IMR-90 (cell line): ENCODE measurements at regions of chr6 and their contacts with region 1.

Region 1: DNA sequence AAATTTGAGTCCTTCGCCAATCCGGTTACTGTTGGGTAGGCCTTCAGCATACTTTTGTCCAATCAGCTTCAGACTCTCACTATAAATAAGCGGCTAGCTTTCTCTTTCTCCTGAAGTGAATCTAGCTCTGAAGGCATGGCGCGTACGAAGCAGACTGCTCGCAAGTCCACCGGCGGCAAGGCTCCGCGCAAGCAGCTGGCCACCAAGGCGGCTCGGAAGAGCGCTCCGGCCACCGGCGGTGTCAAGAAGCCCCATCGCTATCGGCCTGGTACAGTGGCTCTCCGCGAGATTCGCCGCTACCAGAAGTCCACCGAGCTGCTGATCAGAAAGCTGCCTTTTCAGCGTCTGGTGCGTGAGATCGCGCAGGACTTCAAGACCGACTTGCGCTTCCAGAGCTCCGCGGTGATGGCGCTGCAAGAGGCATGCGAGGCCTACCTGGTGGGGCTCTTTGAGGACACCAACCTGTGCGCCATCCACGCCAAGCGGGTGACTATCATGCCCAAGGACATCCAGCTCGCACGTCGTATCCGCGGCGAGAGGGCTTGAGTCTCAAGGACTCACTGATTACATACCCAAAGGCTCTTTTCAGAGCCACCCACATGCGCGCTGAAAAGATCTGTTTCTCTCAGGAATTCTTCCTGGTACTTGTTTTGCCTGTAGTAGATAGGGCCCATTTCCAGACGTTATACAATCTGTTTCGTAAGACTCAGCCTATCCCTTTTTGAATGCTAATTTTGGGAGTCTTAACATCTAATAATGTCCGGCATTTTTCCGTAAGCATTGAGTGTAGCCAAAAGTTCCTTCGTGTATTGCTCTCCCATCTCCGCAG is 102.0 kb downstream of the OR2B2 start:
- DNase-seq: peak; percentile 98
- ATAC-seq: peak; percentile 52
- H3K4me3 ChIP-seq: peak overlapping the region; percentile 58
- H3K27ac ChIP-seq: peak overlapping the region; percentile 87
- H3K4me1 ChIP-seq: peaks cover 3% of the 10 kb centered on the region
- H3K27me3 ChIP-seq: no peaks in the 10 kb centered on the region
- CTCF ChIP-seq: 0 out of 2 replicates have a peak, but pooled peaks have one; percentile 16
- POLR2A ChIP-seq: peak; percentile 99
- RAD21 ChIP-seq: no peak

Region 2: GRCh38 chr6:27871924-27872638 is 61.9 kb after region 1 on chr6:
- CTCF ChIA-PET with region 1: no interaction called
- POLR2A ChIA-PET with region 1: interaction called, 8 read pairs
- dilution Hi-C with region 1: no loop called
- in situ Hi-C with region 1: no loop called
- intact Hi-C with region 1: loop called (anchors 2 kb)
- DNase-seq: peak; percentile 97
- ATAC-seq: peak; percentile 76
- H3K4me3 ChIP-seq: peak overlapping the region; percentile 79
- H3K27ac ChIP-seq: peak overlapping the region; percentile 95
- H3K4me1 ChIP-seq: no peaks in the 10 kb centered on the region
- H3K27me3 ChIP-seq: no peaks in the 10 kb centered on the region
- CTCF ChIP-seq: peak; percentile 24; the same call in 1 of the 2 replicates
- POLR2A ChIP-seq: peak; percentile 99
- RAD21 ChIP-seq: no peak